ENCODE measurements at regions of chr11 and their contacts with region 1.

Region 1: GRCh38 chr11:128290106-128290840 is 297.1 kb downstream of the ETS1 start:
- DNase-seq: peak; percentile 50 to 87 (median 81)
- ATAC-seq: peak; percentile 86
- H3K4me3 ChIP-seq: peak overlapping the region; percentile 61
- H3K4me3 Mint-ChIP-seq: peak overlapping the region; percentile 86 to 98 (median 90)
- H3K27ac ChIP-seq: peak overlapping the region; percentile 98
- H3K27ac Mint-ChIP-seq: peak overlapping the region; percentile 93 to 100 (median 98)
- H3K4me1 ChIP-seq: peaks cover 51 to 79% of the 10 kb centered on the region in 2 donors
- H3K4me1 Mint-ChIP-seq: peaks cover 62 to 100% (median 96%) of the 10 kb centered on the region in 7 donors
- H3K27me3 ChIP-seq: no peaks in the 10 kb centered on the region
- H3K27me3 Mint-ChIP-seq: no peaks in the 10 kb centered on the region

Region 2: DNA sequence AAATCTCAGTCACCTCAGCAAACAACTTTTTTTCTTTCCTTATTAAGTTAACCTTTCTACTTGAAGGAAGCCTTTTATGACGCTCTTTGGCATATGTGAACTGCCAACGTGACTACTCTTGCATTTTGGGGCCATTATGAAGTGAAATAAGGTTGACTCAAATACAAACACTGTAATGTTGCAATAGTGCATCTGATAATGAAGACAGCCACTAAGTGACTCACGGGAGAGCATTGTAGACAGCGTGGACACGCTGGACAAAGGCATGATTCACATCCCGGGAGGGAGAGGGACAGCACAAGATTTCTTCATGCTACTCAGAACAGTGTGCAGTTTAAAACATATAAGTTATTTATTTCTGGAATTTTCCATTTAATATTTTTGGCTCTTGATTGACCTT is 263.7 kb before region 1 on chr11:
- CTCF ChIA-PET with region 1: no interaction called
- POLR2A ChIA-PET with region 1: no interaction called
- intact Hi-C with region 1: loop called (anchors 1 kb)
- DNase-seq: no peak
- ATAC-seq: peak; percentile 34
- H3K4me3 ChIP-seq: no peak overlapping the region
- H3K4me3 Mint-ChIP-seq: no peak overlapping the region
- H3K27ac ChIP-seq: no peak overlapping the region
- H3K27ac Mint-ChIP-seq: peak overlapping the region in 1 of 9 donors; percentile 12
- H3K4me1 ChIP-seq: peaks cover 0 to under 1% of the 10 kb centered on the region in 2 donors
- H3K4me1 Mint-ChIP-seq: peaks cover 0 to 5% (median 3%) of the 10 kb centered on the region in 7 donors
- H3K27me3 ChIP-seq: no peaks in the 10 kb centered on the region
- H3K27me3 Mint-ChIP-seq: peaks cover 0 to 37% (median 2%) of the 10 kb centered on the region in 5 donors

Region 3: GRCh38 chr11:128232588-128232987 is 57.7 kb before region 1 on chr11:
- CTCF ChIA-PET with region 1: no interaction called
- POLR2A ChIA-PET with region 1: no interaction called
- intact Hi-C with region 1: loop called in 1 of 2 experiments (anchors 2 kb)
- DNase-seq: peak in 1 of 9 donors; percentile 71
- ATAC-seq: no peak
- H3K4me3 ChIP-seq: no peak overlapping the region
- H3K4me3 Mint-ChIP-seq: no peak overlapping the region
- H3K27ac ChIP-seq: no peak overlapping the region
- H3K27ac Mint-ChIP-seq: peak overlapping the region in 1 of 9 donors; percentile 10
- H3K4me1 ChIP-seq: no peaks in the 10 kb centered on the region
- H3K4me1 Mint-ChIP-seq: peaks cover 0 to 29% (median under 1%) of the 10 kb centered on the region in 7 donors
- H3K27me3 ChIP-seq: no peaks in the 10 kb centered on the region
- H3K27me3 Mint-ChIP-seq: no peaks in the 10 kb centered on the region

Region 4: DNA sequence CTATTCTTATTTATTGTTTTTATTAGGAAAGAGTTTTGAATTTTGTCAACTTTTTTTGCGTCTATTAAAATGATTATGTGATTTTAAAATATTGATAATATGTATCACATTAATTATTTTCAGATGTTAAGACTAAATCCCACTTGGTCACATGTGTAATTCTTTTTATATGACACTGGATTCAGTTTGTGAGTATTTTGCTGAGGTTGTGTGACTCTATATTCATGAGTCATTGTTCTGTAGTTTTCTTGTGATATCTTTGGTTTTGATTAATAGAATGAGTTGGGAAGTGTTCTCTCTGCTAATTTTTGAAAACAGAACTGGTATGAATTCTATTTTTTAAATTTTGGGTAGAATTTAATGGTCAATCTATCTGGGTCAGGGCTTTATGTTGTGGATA is 20.8 kb before region 1 on chr11:
- CTCF ChIA-PET with region 1: no interaction called
- POLR2A ChIA-PET with region 1: no interaction called
- intact Hi-C with region 1: no loop called
- DNase-seq: no peak
- ATAC-seq: no peak
- H3K4me3 ChIP-seq: no peak overlapping the region
- H3K4me3 Mint-ChIP-seq: no peak overlapping the region
- H3K27ac ChIP-seq: no peak overlapping the region
- H3K27ac Mint-ChIP-seq: no peak overlapping the region
- H3K4me1 ChIP-seq: peaks cover 0 to 5% of the 10 kb centered on the region in 2 donors
- H3K4me1 Mint-ChIP-seq: peaks cover 5 to 24% (median 22%) of the 10 kb centered on the region in 7 donors
- H3K27me3 ChIP-seq: no peaks in the 10 kb centered on the region
- H3K27me3 Mint-ChIP-seq: peaks cover 0 to 13% (median 0%) of the 10 kb centered on the region in 5 donors

Region 5: GRCh38 chr11:128336203-128336602 is 45.9 kb after region 1 on chr11:
- CTCF ChIA-PET with region 1: interaction called, 3 read pairs
- POLR2A ChIA-PET with region 1: interaction called, 13 read pairs
- intact Hi-C with region 1: loop called in 1 of 2 experiments (anchors 1 kb)
- DNase-seq: no peak
- ATAC-seq: no peak
- H3K4me3 ChIP-seq: no peak overlapping the region
- H3K4me3 Mint-ChIP-seq: peak overlapping the region in 1 of 10 donors; percentile 35
- H3K27ac ChIP-seq: no peak overlapping the region
- H3K27ac Mint-ChIP-seq: peak overlapping the region in 4 of 9 donors; percentile 18 to 99 (median 77)
- H3K4me1 ChIP-seq: peaks cover 10 to 38% of the 10 kb centered on the region in 2 donors
- H3K4me1 Mint-ChIP-seq: peaks cover 33 to 92% (median 81%) of the 10 kb centered on the region in 7 donors
- H3K27me3 ChIP-seq: no peaks in the 10 kb centered on the region
- H3K27me3 Mint-ChIP-seq: no peaks in the 10 kb centered on the region

Region 6: DNA sequence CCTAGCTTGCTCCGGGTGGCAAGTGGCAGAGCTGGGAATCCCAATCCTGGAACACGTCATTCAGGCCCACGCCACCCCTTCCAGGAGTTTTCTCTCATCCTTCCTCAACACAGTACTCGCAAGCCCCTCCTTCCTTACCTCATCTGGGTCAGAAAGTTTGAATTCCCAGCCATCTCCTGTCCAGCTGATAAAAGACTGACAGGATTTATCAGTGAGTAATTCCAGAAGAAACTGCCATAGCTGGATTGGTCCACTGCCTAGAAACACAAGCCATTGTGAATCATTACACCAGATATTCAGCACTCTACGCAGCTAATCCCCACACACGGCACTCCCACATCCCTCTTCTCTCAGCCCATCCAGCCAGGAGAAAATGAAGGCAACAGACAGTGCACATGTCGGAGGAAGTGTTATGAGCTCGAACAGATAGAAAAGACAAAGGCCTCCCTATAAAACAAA is 173.1 kb after region 1 on chr11:
- CTCF ChIA-PET with region 1: interaction called, 7 read pairs
- POLR2A ChIA-PET with region 1: interaction called, 355 read pairs
- intact Hi-C with region 1: loop called (anchors 1 kb)
- DNase-seq: no peak
- ATAC-seq: no peak
- H3K4me3 ChIP-seq: peak overlapping the region; percentile 37
- H3K4me3 Mint-ChIP-seq: peak overlapping the region; percentile 73 to 99 (median 80)
- H3K27ac ChIP-seq: peak overlapping the region; percentile 97
- H3K27ac Mint-ChIP-seq: peak overlapping the region; percentile 88 to 100 (median 98)
- H3K4me1 ChIP-seq: peaks cover 74 to 86% of the 10 kb centered on the region in 2 donors
- H3K4me1 Mint-ChIP-seq: peaks cover 64 to 100% (median 93%) of the 10 kb centered on the region in 7 donors
- H3K27me3 ChIP-seq: no peaks in the 10 kb centered on the region
- H3K27me3 Mint-ChIP-seq: no peaks in the 10 kb centered on the region

Region 7: GRCh38 chr11:128522055-128522942 is 232.0 kb after region 1 on chr11:
- CTCF ChIA-PET with region 1: interaction called, 13 read pairs
- POLR2A ChIA-PET with region 1: interaction called, 691 read pairs
- intact Hi-C with region 1: loop called (anchors 1 kb)
- DNase-seq: peak; percentile 67 to 95 (median 84)
- ATAC-seq: peak; percentile 87
- H3K4me3 ChIP-seq: peak overlapping the region; percentile 96
- H3K4me3 Mint-ChIP-seq: peak overlapping the region; percentile 94 to 100 (median 98)
- H3K27ac ChIP-seq: peak overlapping the region; percentile 97
- H3K27ac Mint-ChIP-seq: peak overlapping the region; percentile 94 to 99 (median 98)
- H3K4me1 ChIP-seq: peaks cover 36 to 43% of the 10 kb centered on the region in 2 donors
- H3K4me1 Mint-ChIP-seq: peaks cover 35 to 52% (median 45%) of the 10 kb centered on the region in 7 donors
- H3K27me3 ChIP-seq: no peaks in the 10 kb centered on the region
- H3K27me3 Mint-ChIP-seq: peaks cover 0 to 3% (median 0%) of the 10 kb centered on the region in 5 donors

Region 8: GRCh38 chr11:128653801-128654231 is 363.5 kb after region 1 on chr11:
- CTCF ChIA-PET with region 1: no interaction called
- POLR2A ChIA-PET with region 1: no interaction called
- intact Hi-C with region 1: no loop called
- DNase-seq: no peak
- ATAC-seq: peak; percentile 40
- H3K4me3 ChIP-seq: no peak overlapping the region
- H3K4me3 Mint-ChIP-seq: peak overlapping the region in 8 of 10 donors; percentile 3 to 65 (median 47)
- H3K27ac ChIP-seq: no peak overlapping the region
- H3K27ac Mint-ChIP-seq: no peak overlapping the region
- H3K4me1 ChIP-seq: no peaks in the 10 kb centered on the region
- H3K4me1 Mint-ChIP-seq: peaks cover 3 to 13% (median 12%) of the 10 kb centered on the region in 7 donors
- H3K27me3 ChIP-seq: no peaks in the 10 kb centered on the region
- H3K27me3 Mint-ChIP-seq: peaks cover 0 to 41% (median 6%) of the 10 kb centered on the region in 5 donors

Region 9: DNA sequence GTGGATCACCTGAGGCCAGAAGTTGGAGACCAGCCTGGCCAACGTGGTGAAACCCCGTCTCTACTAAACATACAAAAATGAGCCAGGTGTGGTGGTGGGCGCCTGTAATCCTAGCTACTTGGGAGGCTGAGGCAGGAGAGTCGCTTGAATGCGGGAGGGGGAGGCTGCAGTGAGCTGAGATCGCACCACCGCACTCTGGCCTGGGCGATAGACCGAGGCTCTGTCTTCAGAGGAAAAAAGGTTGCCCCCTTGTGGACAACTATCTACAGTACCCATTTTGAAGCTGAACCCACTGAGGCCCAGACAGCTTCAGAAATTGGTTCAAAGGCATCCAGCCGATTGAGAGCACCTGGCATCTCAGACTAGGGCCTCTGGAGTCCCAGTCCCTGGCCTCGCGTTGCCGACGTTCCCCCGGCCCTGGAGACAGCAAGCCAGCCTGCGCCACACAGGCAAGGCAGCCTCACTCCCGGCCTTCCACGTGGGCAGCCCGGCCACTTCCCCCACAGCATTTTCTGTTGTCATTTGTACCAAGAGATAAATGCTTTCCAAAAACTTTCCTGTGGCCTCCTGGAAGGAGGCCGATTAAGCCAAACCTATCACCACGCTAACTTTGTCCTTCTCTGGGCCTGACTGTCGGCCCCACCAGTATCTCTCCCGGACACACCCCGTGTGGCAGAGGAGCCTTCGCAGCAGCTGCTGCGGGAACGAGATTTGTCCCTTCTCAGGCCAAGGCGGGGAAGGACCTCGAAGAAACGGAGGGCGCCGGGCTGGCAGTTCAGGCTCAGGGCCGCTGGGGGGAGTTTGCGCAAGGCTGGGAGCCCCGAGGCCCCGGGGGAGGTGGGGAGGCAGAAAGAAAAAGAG is 486.4 kb after region 1 on chr11:
- CTCF ChIA-PET with region 1: no interaction called
- POLR2A ChIA-PET with region 1: no interaction called
- intact Hi-C with region 1: loop called in 1 of 2 experiments (anchors 1 kb)
- DNase-seq: peak in 7 of 9 donors; percentile 12 to 44 (median 38)
- ATAC-seq: peak; percentile 80
- H3K4me3 ChIP-seq: no peak overlapping the region
- H3K4me3 Mint-ChIP-seq: no peak overlapping the region
- H3K27ac ChIP-seq: no peak overlapping the region
- H3K27ac Mint-ChIP-seq: peak overlapping the region in 6 of 9 donors; percentile 34 to 65 (median 58)
- H3K4me1 ChIP-seq: peaks cover 21 to 34% of the 10 kb centered on the region in 2 donors
- H3K4me1 Mint-ChIP-seq: peaks cover 46 to 89% (median 66%) of the 10 kb centered on the region in 7 donors
- H3K27me3 ChIP-seq: no peaks in the 10 kb centered on the region
- H3K27me3 Mint-ChIP-seq: no peaks in the 10 kb centered on the region

Measured in naive thymus-derived CD4-positive, alpha-beta T cell (primary cell).